ENCODE measurements at regions of chr19 and their contacts with region 1.

Region 1: GRCh38 chr19:41310033-41310758 is at the start of gene CCDC97:
- DNase-seq: peak; percentile 90
- ATAC-seq: peak; percentile 84 to 85
- total RNA-seq, gene CCDC97: 18.0 to 18.6 TPM

Region 2: DNA sequence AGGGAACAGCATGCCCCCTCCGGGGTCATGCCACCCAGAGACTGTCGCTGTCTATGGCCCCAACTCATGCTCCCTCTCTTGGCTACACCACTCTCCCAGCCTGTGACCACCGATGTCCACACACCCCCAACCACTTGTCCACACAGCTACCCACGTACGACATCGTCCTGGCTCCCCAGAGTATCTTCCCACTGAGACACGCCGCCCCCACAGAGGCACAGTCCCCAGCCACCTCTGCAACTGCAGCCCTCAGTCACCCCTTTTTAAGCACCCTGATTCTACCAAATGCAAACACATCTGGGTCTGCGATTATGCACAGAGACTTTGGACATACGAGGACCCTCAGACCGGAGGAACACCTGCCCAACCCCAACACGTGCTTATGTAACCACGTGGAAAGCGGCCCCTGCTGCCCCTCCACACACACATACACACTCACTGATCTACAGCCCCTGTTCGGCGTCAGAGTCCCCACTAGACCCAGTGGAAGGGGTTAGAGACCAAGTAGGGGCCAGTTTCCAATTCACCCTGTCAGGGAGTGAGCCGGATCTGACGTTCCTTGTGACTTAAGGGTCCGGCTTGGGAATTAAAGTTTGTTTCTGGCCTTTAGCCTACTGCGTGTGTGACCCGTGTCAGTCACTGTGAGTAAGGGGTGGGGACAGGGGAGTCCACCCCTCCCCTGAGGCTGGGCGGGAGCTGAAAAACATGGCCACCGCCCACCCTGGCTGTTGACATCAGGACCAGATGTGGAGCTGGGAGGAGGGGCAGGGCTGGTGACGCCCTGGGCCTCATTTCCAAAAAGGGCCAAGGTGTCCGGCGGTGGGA is 103.1 kb before region 1 on chr19:
- intact Hi-C with region 1: loop called (anchors 1 to 5 kb)
- DNase-seq: peak; percentile 85
- ATAC-seq: peak; percentile 78 to 79

Region 3: DNA sequence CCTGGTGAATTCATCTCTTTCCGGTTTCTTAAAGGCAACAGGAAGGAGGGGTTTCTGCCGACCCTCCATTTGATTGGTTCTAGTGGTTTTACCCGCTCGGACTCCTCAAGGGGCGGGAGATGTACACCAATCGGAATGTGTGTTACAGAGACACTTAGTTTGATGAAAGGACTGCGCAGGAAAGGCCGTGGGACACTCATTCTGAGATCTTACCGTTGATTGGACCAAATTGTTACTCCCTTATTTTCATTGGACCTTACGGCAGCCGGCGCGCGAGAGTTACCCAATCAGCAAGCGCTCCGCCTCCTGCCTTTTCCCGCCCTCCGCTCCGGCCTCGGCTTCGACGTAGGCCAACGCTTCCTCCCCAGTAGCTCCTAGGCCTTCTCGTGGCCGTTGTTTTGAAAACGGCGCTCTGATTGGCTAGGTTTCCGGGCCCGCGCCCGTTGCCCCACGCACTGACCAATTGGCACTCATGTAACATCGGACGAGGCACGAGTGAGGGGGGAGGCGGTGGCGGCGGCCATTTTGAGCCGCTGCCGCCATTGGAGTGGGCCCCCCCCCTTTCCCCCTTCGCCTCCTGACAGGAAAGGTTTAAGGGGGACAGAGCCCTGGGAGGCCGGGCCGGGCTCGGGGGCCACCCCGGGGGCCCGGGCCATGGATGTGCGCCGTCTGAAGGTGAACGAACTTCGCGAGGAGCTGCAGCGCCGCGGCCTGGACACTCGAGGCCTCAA is 46.2 kb before region 1 on chr19 and contains the start of gene HNRNPUL1:
- intact Hi-C with region 1: loop called in 1 of 2 experiments (anchors 2 kb)
- DNase-seq: peak; percentile 98
- ATAC-seq: peak; percentile 85 to 87
- total RNA-seq, gene HNRNPUL1: 116 to 147 TPM

Region 4: DNA sequence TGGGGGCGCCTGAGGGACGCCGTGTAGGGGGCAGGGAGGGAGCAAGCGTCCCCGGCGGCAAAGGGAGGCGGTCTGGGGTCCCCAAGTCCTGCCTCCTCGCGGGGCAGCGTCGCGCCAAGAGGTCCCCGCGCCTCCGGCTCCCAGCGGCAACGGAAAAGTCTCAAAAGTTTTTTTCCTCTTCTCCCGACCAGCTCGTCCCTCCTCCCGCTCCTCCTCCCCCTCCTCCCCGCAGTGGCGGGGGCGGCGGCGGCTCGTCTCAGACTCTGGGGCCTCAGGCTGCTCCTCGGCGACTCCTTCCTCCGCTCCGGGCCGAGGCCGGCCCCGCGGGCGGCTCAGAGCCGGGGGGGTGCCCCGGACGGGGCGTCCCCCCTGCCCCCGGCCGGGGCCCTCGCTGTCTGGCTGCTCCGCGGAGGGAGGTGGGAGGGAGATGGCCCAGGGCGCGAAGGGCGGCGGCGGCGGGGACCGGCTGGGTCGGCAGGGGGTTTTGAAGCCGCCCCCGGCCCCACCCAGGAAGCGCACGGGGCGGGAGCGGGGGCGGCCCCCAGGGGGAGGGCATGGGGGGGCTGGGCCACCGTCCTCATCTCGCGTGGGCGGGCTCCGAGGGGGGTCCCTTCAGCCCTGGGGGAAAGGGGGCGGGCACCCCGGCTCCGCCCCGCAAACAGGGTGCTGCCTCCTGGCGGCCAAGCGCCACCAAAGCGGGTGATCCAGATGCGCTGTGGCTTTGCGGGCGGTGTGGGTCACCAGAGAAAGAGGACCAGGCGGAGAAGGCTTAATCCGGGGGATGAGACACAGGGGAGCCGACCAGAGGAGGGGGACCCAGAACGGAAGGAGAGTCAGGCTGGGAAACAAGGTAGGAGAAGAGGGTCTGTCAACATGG is 43.5 kb after region 1 on chr19 and contains the start of gene TGFB1:
- intact Hi-C with region 1: loop called in 1 of 2 experiments (anchors 5 kb)
- DNase-seq: peak; percentile 92
- ATAC-seq: peak; percentile 75 to 82
- total RNA-seq, gene TGFB1: 29.3 to 31.5 TPM

Measured in left cardiac atrium (tissue), 4 donors.